HAP-1 (cell line): ENCODE measurements at regions of chr3 and their contacts with region 1.

Region 1: GRCh38 chr3:111717601-111718000 is 122.5 kb upstream of the ZBED2 start:
- DNase-seq: peak; percentile 64 to 87
- H3K4me3 ChIP-seq: no peak overlapping the region
- H3K4me1 ChIP-seq: no peaks in the 10 kb centered on the region
- H3K27me3 ChIP-seq: no peaks in the 10 kb centered on the region

Region 2: GRCh38 chr3:111666041-111666735 is 51.4 kb before region 1 on chr3:
- in situ Hi-C with region 1: no loop called
- DNase-seq: no peak
- H3K4me3 ChIP-seq: no peak overlapping the region
- H3K4me1 ChIP-seq: no peaks in the 10 kb centered on the region
- H3K27me3 ChIP-seq: no peaks in the 10 kb centered on the region

Region 3: DNA sequence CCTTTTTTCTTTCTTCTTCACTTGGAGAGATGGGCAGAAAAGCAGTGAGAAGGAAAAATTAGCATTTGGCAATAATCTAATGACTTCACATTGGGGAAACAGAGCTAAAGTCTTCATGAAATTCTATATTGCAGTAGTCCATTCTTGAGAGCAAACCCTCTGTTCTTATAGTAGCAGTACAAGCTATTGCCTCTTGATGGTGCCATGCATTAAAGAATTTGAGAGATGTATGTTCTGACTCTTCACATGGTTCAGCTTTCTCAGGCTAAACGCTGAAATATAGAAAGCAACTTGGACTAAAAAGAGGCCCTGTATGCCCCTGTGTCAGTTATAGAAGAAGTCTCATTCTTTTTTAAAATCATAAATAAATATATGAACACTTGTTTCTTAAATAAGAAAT is 177.5 kb after region 1 on chr3:
- in situ Hi-C with region 1: no loop called
- DNase-seq: peak in 1 of 2 experiments; percentile 27
- H3K4me3 ChIP-seq: no peak overlapping the region
- H3K4me1 ChIP-seq: no peaks in the 10 kb centered on the region
- H3K27me3 ChIP-seq: peaks cover 2% of the 10 kb centered on the region; the same call in 1 of the 2 replicates

Region 4: GRCh38 chr3:111971533-111972130 is 254.0 kb after region 1 on chr3:
- in situ Hi-C with region 1: loop called (anchors 5 kb)
- DNase-seq: no peak
- H3K4me3 ChIP-seq: no peak overlapping the region
- H3K4me1 ChIP-seq: no peaks in the 10 kb centered on the region
- H3K27me3 ChIP-seq: peaks cover 8% of the 10 kb centered on the region